ENCODE measurements at regions of chr1 and their contacts with region 1.

Region 1: GRCh38 chr1:176073524-176074157 is 133.4 kb downstream of the COP1 start:
- DNase-seq: peak; percentile 52 to 79 (median 55)
- ATAC-seq: peak; percentile 98
- H3K4me3 ChIP-seq: no peak overlapping the region
- H3K27ac ChIP-seq: no peak overlapping the region
- H3K4me1 ChIP-seq: no peaks in the 10 kb centered on the region
- H3K27me3 ChIP-seq: no peaks in the 10 kb centered on the region
- CTCF ChIP-seq: peak; percentile 51 to 78 (median 72); a peak in 5 of 6 replicates
- EP300 ChIP-seq: no peak
- POLR2A ChIP-seq: no peak
- RAD21 ChIP-seq: peak; percentile 69 to 84

Region 2: DNA sequence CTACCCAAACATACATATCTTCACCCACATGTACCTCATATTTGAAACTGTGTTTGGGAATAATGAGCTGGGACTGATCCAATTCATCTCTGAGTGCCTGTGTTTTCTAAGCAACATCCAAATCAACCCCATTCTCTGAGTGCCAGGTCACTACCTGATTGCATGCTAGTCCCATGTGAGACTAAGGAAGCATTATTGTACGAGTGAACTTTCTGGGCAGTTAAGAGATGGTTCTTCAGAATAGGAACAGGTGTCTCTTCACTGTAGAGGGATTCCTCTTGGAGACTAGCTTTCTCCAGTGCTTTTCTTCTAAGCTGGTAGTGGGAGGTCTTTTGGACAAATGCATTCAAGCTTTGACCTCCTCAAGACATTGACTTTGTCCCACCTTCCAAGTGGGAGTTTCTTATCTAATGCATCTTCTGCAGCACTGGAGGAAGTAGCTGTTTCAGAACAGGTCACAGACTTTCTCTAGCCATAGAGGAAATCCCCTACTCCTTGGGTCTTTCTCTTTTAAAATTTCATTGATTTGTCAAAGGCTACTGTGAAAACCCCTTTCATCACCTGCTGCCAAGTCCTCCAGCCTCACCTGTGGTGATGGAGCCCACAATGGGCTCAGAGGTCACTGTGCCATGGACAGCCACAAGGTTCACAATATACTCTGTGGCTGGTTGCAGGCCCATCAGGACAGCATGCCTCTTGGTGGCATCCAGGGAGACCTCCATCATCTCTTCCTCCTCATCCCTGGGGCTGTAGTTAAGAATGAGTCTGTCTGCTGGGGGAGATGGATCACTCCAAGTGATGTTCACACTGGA is 709.0 kb before region 1 on chr1:
- CTCF ChIA-PET with region 1: no interaction called
- POLR2A ChIA-PET with region 1: no interaction called
- in situ Hi-C with region 1: loop called (anchors 10 kb)
- intact Hi-C with region 1: no loop called
- DNase-seq: no peak
- ATAC-seq: no peak
- H3K4me3 ChIP-seq: no peak overlapping the region
- H3K27ac ChIP-seq: no peak overlapping the region
- H3K4me1 ChIP-seq: no peaks in the 10 kb centered on the region
- H3K27me3 ChIP-seq: peaks cover 9 to 18% of the 10 kb centered on the region in 2 experiments; a peak in 4 of 5 replicates
- CTCF ChIP-seq: no peak
- EP300 ChIP-seq: no peak
- POLR2A ChIP-seq: no peak
- RAD21 ChIP-seq: no peak

Region 3: DNA sequence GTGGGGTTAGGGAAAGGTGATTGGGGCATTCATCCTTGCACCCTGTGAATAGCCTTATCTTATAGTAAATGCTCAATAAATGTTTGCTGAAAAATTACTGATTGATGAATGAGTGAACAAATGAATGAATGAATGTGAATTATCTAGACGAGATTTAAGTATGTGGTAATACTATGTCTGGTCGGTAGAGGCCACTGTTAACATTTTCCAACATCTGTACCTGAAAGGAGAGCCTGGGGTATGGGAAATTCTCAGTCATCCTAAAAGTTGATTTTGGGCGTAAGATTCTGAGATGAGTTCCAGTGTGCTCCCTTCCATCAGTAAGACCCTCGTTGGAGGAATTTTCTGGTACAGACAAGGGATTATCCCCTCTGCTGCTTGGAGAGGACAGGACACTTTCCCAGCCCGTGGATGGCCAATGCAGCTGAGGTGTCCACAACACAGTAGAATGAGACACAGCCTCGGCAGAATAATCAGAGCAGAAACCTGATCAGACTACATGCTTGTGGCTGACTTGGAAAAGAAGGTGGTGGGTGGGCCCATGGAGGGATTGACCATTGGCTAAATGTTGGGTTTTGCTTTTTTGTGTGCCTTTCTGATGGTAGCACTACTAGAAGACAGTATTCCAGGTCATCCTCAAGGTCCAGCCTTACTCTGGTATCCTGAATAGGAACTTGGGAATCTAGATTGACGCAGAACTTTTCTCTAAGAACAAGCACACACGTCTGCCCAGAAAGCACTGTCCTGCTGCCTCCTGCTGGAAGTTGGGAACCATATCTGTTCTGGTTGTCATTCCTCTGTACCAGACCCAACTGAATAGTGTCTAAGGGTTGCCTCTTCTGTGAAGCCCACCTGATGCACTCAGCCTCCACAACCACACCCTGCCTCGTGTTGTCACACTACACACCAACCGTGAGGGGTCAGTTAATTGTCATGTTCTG is 592.2 kb before region 1 on chr1:
- CTCF ChIA-PET with region 1: interaction called, 3 read pairs
- POLR2A ChIA-PET with region 1: no interaction called
- in situ Hi-C with region 1: no loop called
- intact Hi-C with region 1: loop called (anchors 10 kb)
- DNase-seq: peak; percentile 32 to 57 (median 44)
- ATAC-seq: peak; percentile 91
- H3K4me3 ChIP-seq: no peak overlapping the region
- H3K27ac ChIP-seq: no peak overlapping the region
- H3K4me1 ChIP-seq: no peaks in the 10 kb centered on the region
- H3K27me3 ChIP-seq: no peaks in the 10 kb centered on the region; a peak in 1 of 5 replicates
- CTCF ChIP-seq: peak; percentile 40 to 76 (median 62); a peak in 5 of 6 replicates
- EP300 ChIP-seq: no peak
- POLR2A ChIP-seq: no peak
- RAD21 ChIP-seq: peak; percentile 45 to 67

Region 4: DNA sequence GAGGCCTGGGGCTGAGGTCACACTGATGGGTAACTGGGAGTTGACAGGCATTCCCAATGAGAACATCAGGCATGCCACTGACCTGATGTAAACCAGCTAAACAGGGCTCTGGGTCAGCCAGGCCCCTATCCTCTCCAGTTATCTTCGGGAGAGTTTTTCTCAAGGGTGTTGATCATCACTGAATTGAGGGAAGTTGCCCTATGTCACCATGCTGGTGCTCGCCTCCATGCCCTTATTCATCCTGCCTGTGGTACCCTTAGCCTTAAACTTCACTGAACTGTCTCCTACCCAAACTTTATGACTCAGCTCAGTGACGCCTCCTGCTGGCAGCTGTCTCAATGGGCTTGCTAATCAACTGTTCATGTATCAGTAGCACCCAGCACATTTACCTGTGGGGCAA is 249.6 kb before region 1 on chr1:
- CTCF ChIA-PET with region 1: no interaction called
- POLR2A ChIA-PET with region 1: no interaction called
- in situ Hi-C with region 1: no loop called
- intact Hi-C with region 1: loop called (anchors 5 kb)
- DNase-seq: peak; percentile 21 to 58 (median 28)
- ATAC-seq: peak; percentile 78
- H3K4me3 ChIP-seq: no peak overlapping the region
- H3K27ac ChIP-seq: no peak overlapping the region
- H3K4me1 ChIP-seq: no peaks in the 10 kb centered on the region
- H3K27me3 ChIP-seq: no peaks in the 10 kb centered on the region
- CTCF ChIP-seq: peak; percentile 68 to 73 (median 70)
- EP300 ChIP-seq: no peak
- POLR2A ChIP-seq: no peak
- RAD21 ChIP-seq: peak in 1 of 2 experiments; percentile 57; a peak in 3 of 4 replicates

Region 5: GRCh38 chr1:175887981-175888433 is 185.6 kb before region 1 on chr1:
- CTCF ChIA-PET with region 1: no interaction called
- POLR2A ChIA-PET with region 1: no interaction called
- in situ Hi-C with region 1: no loop called
- intact Hi-C with region 1: loop called (anchors 2 kb)
- DNase-seq: peak; percentile 74 to 83 (median 82)
- ATAC-seq: peak; percentile 99
- H3K4me3 ChIP-seq: no peak overlapping the region
- H3K27ac ChIP-seq: no peak overlapping the region
- H3K4me1 ChIP-seq: peaks cover 4 to 10% of the 10 kb centered on the region in 2 experiments; a peak in 4 of 5 replicates
- H3K27me3 ChIP-seq: peaks cover 15 to 61% of the 10 kb centered on the region in 2 experiments; a peak in 4 of 5 replicates
- CTCF ChIP-seq: peak; percentile 82 to 93 (median 83)
- EP300 ChIP-seq: no peak
- POLR2A ChIP-seq: no peak
- RAD21 ChIP-seq: peak; percentile 59 to 69